ENCODE measurements at regions of chr21 and their contacts with region 1.

Region 1: DNA sequence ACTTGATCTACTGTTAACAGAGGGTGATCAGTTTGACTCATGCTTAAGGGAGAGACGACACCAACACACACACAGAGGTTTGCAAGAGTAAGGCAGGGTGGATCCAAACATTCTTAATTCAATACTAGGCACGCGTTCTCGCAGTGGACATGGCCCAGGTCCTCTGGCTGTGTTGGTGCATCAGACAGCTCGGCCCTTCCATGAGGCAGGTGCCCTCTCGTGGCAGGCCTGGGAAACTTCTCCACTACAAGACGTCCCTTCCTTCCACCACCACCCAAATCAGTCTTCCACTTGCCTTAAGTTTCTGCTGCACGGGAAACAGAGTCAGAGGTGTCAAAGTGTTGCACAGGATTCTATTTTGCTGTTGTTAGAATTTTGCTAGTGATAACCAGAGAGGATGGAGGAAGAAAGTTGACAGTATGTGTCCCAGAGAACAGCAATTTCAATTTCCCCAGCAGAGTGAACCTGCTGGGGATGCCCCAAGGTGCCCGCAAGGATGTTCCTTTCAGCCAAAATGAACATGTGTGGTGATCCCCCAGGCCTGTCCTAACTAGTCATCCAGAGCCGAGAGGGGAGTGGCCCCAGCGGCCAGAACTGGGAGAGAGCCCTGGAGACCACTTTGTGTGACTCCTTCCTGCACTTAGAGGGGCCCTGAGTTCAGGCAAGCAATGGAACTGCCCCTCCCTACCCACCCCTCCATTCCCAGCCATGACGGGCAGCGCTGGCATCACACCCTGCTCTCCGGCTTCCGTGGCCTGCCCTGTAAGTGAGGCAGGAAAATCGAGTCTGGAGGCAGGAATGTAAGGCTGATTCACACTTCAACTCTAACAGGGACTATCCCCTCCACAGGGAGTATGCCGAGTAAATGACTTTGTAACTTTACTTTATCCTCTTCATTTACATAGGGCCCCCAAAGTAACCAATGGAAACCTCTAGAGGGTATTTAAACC is 34.8 kb downstream of the MX1 start:
- DNase-seq: peak; percentile 16 to 58 (median 41)
- ATAC-seq: peak; percentile 79
- H3K4me3 ChIP-seq: no peak overlapping the region
- H3K4me3 Mint-ChIP-seq: no peak overlapping the region
- H3K27ac ChIP-seq: no peak overlapping the region
- H3K27ac Mint-ChIP-seq: peak overlapping the region in 5 of 9 donors; percentile 49 to 86 (median 76)
- H3K4me1 ChIP-seq: no peaks in the 10 kb centered on the region
- H3K4me1 Mint-ChIP-seq: peaks cover 0 to 18% (median 2%) of the 10 kb centered on the region in 7 donors
- H3K27me3 ChIP-seq: no peaks in the 10 kb centered on the region
- H3K27me3 Mint-ChIP-seq: no peaks in the 10 kb centered on the region

Region 2: DNA sequence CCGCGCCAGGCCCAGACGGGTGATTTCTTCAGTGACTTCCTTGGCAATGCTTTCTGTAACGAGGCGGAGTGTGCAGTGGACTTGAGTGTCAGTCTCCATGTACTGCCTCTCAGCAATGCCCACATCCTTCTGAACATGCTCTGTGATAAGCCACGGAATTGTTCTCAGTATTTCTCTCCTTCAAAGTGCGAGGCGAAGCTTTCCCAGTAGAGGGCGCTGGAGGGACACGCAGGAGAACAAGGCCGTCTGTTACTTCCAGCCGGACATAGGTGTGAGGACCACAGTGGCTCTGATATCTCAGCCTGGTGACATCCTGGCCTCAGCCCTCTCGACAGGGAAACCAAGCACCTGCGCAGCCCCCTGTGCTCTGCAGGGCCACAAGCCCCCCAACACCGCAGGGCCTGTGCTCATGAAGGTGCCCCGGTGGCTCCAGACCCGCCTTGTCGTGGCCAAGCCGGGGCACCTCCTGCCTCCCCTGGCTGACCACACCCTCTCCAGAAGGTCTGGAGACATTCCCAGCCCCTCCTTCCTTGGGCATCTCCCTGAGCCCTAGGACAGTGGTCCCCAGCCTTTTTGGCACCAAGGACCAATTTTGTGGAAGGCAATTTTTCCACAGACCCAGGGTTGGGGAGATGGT is 338.9 kb before region 1 on chr21:
- CTCF ChIA-PET with region 1: no interaction called
- POLR2A ChIA-PET with region 1: no interaction called
- intact Hi-C with region 1: loop called in 1 of 2 experiments (anchors 5 kb)
- DNase-seq: peak in 6 of 9 donors; percentile 7 to 60 (median 20)
- ATAC-seq: peak; percentile 42
- H3K4me3 ChIP-seq: no peak overlapping the region
- H3K4me3 Mint-ChIP-seq: no peak overlapping the region
- H3K27ac ChIP-seq: no peak overlapping the region
- H3K27ac Mint-ChIP-seq: no peak overlapping the region
- H3K4me1 ChIP-seq: no peaks in the 10 kb centered on the region
- H3K4me1 Mint-ChIP-seq: no peaks in the 10 kb centered on the region
- H3K27me3 ChIP-seq: no peaks in the 10 kb centered on the region
- H3K27me3 Mint-ChIP-seq: peaks cover 0 to 28% (median 20%) of the 10 kb centered on the region in 5 donors

Region 3: GRCh38 chr21:41411449-41412089 is 49.3 kb before region 1 on chr21:
- CTCF ChIA-PET with region 1: no interaction called
- POLR2A ChIA-PET with region 1: no interaction called
- intact Hi-C with region 1: no loop called
- DNase-seq: no peak
- ATAC-seq: peak; percentile 37
- H3K4me3 ChIP-seq: no peak overlapping the region
- H3K4me3 Mint-ChIP-seq: peak overlapping the region in 1 of 10 donors; percentile 35
- H3K27ac ChIP-seq: no peak overlapping the region
- H3K27ac Mint-ChIP-seq: peak overlapping the region in 1 of 9 donors; percentile 58
- H3K4me1 ChIP-seq: no peaks in the 10 kb centered on the region
- H3K4me1 Mint-ChIP-seq: peaks cover 0 to 15% (median 4%) of the 10 kb centered on the region in 7 donors
- H3K27me3 ChIP-seq: no peaks in the 10 kb centered on the region
- H3K27me3 Mint-ChIP-seq: peaks cover 0 to 34% (median 0%) of the 10 kb centered on the region in 5 donors

Region 4: DNA sequence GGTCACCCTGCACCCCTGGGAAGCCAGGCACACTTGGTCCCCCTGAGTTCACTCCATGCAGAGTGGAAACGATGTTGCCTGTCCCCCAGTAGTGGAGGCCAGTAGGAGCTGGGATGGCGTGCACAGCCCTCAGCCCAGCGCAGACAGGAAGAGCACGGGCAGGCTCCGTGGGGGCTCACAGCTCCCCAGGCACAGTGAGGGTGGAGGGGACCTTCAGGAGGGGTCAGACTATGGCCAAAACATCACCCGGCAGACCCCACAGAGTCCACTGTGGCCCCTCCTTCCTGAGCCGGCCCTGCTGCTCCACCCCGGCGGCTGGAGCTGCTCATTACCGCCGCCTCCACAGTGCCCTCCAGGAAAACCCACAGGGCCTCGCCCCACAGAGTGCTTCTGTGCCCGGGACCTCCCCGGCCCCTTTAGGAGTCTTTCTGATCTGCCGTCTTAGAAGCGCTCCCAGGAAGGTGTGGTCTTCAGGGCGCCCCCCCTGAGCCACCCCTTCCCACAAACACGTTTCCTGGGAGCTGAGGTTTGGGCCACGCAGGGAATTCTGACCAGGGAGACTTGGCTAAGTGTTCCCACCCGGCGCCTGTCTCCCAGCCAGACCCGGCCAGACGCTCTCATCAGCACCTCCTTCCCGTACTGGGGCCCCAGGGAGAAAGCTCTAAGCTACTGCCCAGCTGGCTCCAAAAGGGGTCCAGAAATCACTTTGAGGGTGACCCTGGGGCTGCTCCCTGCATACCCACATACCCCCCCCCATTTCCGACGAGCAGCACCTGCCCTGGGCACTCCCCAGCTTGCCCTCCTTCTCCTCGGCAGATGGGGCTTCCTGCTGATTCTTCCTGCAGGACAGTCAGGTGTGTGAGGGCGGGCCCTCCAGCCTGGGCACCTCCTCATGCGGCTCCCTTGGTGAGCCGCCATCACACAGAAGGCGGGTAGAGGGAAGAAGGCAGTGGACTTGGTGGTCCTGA is 267.2 kb after region 1 on chr21:
- CTCF ChIA-PET with region 1: no interaction called
- POLR2A ChIA-PET with region 1: no interaction called
- intact Hi-C with region 1: no loop called
- DNase-seq: no peak
- ATAC-seq: no peak
- H3K4me3 ChIP-seq: no peak overlapping the region
- H3K4me3 Mint-ChIP-seq: no peak overlapping the region
- H3K27ac ChIP-seq: no peak overlapping the region
- H3K27ac Mint-ChIP-seq: no peak overlapping the region
- H3K4me1 ChIP-seq: no peaks in the 10 kb centered on the region
- H3K4me1 Mint-ChIP-seq: peaks cover 0 to 14% (median 0%) of the 10 kb centered on the region in 7 donors
- H3K27me3 ChIP-seq: peaks cover 0 to 4% of the 10 kb centered on the region in 2 donors
- H3K27me3 Mint-ChIP-seq: peaks cover 30 to 52% (median 49%) of the 10 kb centered on the region in 5 donors

Measured in naive thymus-derived CD4-positive, alpha-beta T cell (primary cell).